ENCODE measurements at regions of chr2 and their contacts with region 1.

Region 1: GRCh38 chr2:74816540-74817303 is 17.2 kb upstream of the HK2 start:
- DNase-seq: no peak
- H3K4me3 ChIP-seq: no peak overlapping the region
- H3K27ac ChIP-seq: no peak overlapping the region
- H3K4me1 ChIP-seq: no peaks in the 10 kb centered on the region
- H3K27me3 ChIP-seq: no peaks in the 10 kb centered on the region
- CTCF ChIP-seq: no peak

Region 2: DNA sequence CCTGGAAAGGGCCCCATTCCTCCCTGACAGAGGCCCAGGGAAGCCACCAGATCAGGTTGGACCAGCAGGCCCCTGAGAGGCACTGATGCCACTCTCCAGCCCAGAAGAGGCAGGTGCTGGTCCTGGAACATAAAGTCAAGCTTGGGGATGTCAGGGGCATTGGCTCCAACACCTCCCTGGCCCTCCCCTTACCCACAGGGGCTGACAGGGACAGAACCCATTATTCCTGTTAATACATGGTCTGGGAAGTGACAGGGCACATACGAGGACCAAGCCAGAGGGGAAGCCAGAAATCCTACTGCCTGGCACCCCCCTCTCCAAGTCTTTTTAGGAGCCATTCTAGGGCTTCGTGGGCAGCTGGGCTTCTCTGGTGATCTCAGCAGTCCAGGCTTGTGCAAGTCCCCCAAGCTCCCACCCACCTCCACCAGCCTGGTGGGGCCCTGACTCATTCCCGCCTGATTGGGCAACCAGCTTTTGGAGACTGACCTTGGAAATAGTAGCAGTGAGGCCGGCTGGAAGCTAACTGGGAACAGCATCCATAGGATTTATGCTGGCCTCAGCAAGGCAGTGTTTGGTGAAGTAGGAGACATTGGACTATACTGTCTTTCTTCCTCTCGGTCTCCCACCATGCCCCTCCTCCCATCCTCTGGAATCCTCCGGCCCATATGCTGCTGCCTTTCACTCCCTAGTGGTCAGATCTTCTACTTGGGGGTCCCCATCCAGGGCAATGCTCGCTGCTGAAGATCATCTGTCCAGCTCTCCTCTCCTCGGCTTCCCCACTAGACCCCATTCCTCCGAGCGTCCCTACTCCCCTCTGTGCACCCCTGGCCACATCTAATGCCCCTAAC is 69.2 kb before region 1 on chr2:
- CTCF ChIA-PET with region 1: no interaction called
- dilution Hi-C with region 1: loop called (anchors 5 kb)
- in situ Hi-C with region 1: no loop called
- intact Hi-C with region 1: no loop called
- DNase-seq: peak; percentile 38
- H3K4me3 ChIP-seq: no peak overlapping the region
- H3K27ac ChIP-seq: peak overlapping the region; percentile 49
- H3K4me1 ChIP-seq: peaks cover 26% of the 10 kb centered on the region
- H3K27me3 ChIP-seq: no peaks in the 10 kb centered on the region
- CTCF ChIP-seq: no peak

Region 3: GRCh38 chr2:74764429-74765272 is 52.1 kb before region 1 on chr2:
- CTCF ChIA-PET with region 1: no interaction called
- dilution Hi-C with region 1: loop called (anchors 5 kb)
- in situ Hi-C with region 1: no loop called
- intact Hi-C with region 1: no loop called
- DNase-seq: no peak
- H3K4me3 ChIP-seq: no peak overlapping the region
- H3K27ac ChIP-seq: no peak overlapping the region
- H3K4me1 ChIP-seq: no peaks in the 10 kb centered on the region
- H3K27me3 ChIP-seq: no peaks in the 10 kb centered on the region
- CTCF ChIP-seq: no peak